Aorta (tissue), 5 donors: ENCODE measurements at regions of chrX and their contacts with region 1.

Region 1: GRCh38 chrX:1391707-1392375 is at the start of gene SLC25A6:
- DNase-seq: peak; percentile 99 to 100
- ATAC-seq: peak; percentile 99
- H3K4me3 ChIP-seq: peak within 1 kb of the TSS; percentile 72 to 81
- H3K27ac ChIP-seq: peak within 1 kb of the TSS; percentile 20 to 90
- H3K4me1 ChIP-seq: no peaks in the 10 kb centered on the region
- H3K27me3 ChIP-seq: no peaks in the 10 kb centered on the region
- total RNA-seq, gene SLC25A6: 207 to 212 TPM

Region 2: DNA sequence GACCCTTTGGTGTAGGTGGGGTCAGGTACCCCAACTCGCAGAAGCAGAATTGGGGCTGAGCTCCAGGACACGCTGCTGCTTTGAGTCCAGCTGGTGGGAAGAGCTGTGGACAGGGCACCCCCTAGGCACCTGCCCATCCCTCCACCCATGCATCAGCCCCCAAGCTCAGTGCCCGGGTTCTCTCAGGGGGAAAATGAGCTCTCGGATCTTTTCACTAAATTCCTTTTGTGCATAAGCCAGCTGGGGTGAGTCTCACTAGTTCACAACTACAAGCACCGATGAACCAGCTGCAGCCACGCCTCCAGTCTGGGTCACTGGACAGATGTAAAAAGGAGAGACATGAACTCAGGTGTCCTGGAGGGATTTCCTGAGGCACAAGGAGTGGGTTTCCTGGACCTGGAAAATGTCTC is 466.2 kb before region 1 on chrX:
- intact Hi-C with region 1: no loop called
- DNase-seq: no peak
- ATAC-seq: no peak
- H3K4me3 ChIP-seq: no peak overlapping the region
- H3K27ac ChIP-seq: no peak overlapping the region
- H3K4me1 ChIP-seq: no peaks in the 10 kb centered on the region
- H3K27me3 ChIP-seq: no peaks in the 10 kb centered on the region

Region 3: GRCh38 chrX:1027133-1027532 is 364.7 kb before region 1 on chrX:
- intact Hi-C with region 1: no loop called
- DNase-seq: no peak
- ATAC-seq: no peak
- H3K4me3 ChIP-seq: no peak overlapping the region
- H3K27ac ChIP-seq: no peak overlapping the region
- H3K4me1 ChIP-seq: no peaks in the 10 kb centered on the region
- H3K27me3 ChIP-seq: no peaks in the 10 kb centered on the region

Region 4: DNA sequence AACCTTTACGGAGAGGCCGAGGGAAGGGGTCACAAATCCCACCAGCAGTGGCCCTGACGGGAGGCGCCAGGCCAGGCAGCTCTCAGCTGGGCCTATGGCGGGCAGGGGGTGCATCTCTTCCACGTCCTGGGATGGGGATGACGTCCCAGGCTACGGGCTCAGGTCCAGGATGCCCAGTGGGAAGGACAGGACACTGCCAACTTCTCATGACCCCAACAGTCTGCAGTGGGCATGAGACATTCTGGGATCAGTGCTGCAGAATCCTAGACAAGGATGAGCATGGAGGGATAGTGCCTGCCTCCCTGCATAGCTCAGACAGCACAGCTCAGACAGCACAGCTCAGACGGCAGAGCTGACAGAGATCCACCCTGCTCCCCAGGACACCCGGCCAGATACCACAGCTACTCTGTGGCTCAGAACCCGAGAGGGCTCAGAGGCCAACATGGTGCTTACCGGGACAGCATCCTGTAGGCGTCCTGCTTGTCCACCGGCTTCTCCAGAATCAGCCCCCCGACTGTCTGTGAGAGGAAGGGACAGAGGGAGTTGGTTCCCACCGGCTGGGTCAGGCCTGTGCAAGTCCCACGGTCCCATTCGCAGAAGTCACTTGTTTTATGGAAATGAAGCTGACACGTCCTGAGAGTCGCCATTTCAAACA is 43.5 kb after region 1 on chrX:
- intact Hi-C with region 1: loop called in 1 of 2 experiments (anchors 5 kb)
- DNase-seq: peak; percentile 23 to 60
- ATAC-seq: peak; percentile 12
- H3K4me3 ChIP-seq: no peak overlapping the region
- H3K27ac ChIP-seq: no peak overlapping the region
- H3K4me1 ChIP-seq: no peaks in the 10 kb centered on the region
- H3K27me3 ChIP-seq: no peaks in the 10 kb centered on the region

Region 5: DNA sequence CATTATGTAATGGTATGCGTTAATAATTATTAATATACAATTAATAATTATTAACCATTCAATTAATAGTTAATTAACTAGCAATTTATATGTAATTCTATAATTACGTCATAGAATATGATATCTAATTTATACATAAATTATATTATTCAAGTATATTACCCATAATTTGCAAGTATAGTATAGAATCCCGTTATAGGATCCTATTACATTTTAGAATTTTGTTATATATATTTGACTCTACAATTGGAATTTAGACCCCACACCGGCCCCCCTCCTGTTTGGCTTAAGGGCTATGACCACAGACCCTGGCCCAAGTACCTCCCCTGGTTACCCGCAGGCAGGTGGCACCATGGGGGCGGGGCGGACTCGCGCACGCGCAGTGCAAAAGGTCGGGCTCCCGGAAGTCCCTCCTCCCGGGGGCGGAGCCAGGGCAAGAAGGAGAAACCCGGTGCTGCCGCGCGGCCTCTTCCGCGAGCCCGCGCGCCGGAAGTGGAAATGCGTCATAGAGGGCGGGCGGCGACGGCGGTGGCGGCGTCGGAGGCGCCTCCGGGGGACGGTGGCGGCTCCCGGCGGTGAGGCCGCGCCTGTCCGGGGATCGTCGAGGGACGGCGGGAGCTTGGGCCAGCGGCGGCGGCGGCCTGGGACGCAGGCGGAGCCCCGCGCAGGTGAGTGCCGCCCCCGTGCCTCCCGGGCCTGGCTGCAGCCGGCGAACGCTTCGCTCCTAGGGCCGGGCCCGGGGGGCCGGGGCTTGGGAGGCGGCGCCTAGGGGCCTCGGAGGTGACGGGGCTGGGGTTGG is 199.5 kb after region 1 on chrX and contains the start of gene AKAP17A:
- intact Hi-C with region 1: loop called in 1 of 2 experiments (anchors 2 kb)
- DNase-seq: peak; percentile 96 to 99
- ATAC-seq: peak; percentile 97
- H3K4me3 ChIP-seq: peak within 1 kb of the TSS; percentile 89 to 93
- H3K27ac ChIP-seq: peak within 1 kb of the TSS in 1 of 2 donors; percentile 14
- H3K4me1 ChIP-seq: no peaks in the 10 kb centered on the region
- H3K27me3 ChIP-seq: no peaks in the 10 kb centered on the region
- total RNA-seq, gene AKAP17A: 33.0 to 53.7 TPM

Region 6: DNA sequence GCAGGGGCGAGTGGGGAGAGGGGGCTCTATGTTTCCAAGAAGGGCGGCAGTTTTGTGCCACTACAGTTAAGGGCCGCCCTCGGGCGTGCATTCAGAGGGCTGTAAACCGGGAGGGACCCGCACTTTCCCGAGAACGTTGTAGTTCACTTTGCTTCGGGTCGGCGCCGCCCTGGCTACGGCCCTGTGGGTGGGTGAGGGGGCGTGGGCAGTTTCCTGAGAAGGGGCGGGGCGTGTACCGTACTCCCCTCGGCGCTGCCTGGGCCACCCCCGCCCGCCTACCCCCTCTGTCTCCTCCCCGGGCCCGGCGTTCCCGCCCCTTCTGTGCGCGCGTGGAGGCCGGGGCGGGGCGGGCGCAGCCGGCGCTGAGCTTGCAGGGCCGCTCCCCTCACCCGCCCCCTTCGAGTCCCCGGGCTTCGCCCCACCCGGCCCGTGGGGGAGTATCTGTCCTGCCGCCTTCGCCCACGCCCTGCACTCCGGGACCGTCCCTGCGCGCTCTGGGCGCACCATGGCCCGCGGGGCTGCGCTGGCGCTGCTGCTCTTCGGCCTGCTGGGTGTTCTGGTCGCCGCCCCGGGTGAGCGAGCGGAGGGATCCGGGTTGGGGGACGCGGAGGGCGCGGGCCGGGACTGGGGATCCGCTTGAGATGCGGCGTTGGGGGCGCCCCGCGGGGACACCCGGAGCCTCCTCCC is 1299.2 kb after region 1 on chrX and contains the start of gene CD99:
- intact Hi-C with region 1: loop called in 1 of 2 experiments (anchors 5 kb)
- DNase-seq: peak; percentile 94 to 96
- ATAC-seq: peak; percentile 95
- H3K4me3 ChIP-seq: peak within 1 kb of the TSS; percentile 75 to 90
- H3K27ac ChIP-seq: peak within 1 kb of the TSS in 1 of 2 donors; percentile 54
- H3K4me1 ChIP-seq: peaks cover 2 to 5% of the 10 kb centered on the region in 2 donors
- H3K27me3 ChIP-seq: no peaks in the 10 kb centered on the region
- total RNA-seq, gene CD99: 292 to 399 TPM